Caco-2 (cell line): ENCODE measurements at regions of chr16 and their contacts with region 1.

Region 1: DNA sequence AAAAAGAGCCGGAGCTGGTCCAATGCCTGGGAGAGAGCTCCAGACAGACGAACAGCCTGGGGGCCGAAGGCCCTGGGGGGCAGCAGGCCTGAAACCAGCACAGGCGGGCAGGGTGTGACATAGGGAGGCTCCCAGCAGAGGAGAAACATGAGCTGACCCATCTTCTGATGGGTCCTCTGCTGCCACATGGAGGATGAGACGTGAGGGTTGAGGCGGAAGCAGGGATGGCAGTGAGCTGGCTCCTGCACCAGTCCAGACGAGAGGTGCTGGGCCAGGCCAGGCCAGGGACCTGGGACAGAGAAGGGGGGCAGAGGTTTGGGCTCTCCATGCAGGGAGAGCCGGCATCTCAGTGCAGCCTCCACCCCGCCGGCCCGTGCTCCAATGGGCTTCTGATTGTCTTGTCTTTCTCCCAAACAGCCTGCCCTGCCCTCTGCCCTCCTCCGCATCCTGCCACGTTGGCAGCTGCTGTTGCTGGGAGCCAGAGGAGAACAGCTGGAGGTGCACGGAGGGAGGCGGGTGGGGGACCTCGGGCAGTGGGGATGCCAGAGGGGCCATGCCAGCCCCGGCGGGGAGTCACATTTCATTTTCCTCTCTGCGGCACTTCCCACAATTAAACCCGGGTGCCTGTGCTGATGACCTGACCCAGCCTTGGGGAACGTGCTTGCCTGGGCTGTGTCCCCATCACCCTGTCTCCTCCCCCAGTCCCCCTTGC is 139.1 kb upstream of the GSE1 start:
- DNase-seq: no peak
- H3K4me3 ChIP-seq: no peak overlapping the region
- H3K4me3 Mint-ChIP-seq: no peak overlapping the region
- H3K27ac Mint-ChIP-seq: no peak overlapping the region
- H3K4me1 ChIP-seq: peaks cover 19% of the 10 kb centered on the region
- H3K4me1 Mint-ChIP-seq: peaks cover 16% of the 10 kb centered on the region
- H3K27me3 ChIP-seq: no peaks in the 10 kb centered on the region
- H3K27me3 Mint-ChIP-seq: no peaks in the 10 kb centered on the region
- CTCF ChIP-seq: peak in 1 of 2 experiments; percentile 5

Region 2: GRCh38 chr16:85437166-85438055 is 36.7 kb before region 1 on chr16:
- CTCF ChIA-PET with region 1: interaction called, 8 read pairs
- POLR2A ChIA-PET with region 1: interaction called, 5 read pairs
- intact Hi-C with region 1: loop called (anchors 5 kb)
- DNase-seq: peak; percentile 89 to 93
- H3K4me3 ChIP-seq: peak overlapping the region; percentile 29
- H3K4me3 Mint-ChIP-seq: peak overlapping the region; percentile 76
- H3K27ac Mint-ChIP-seq: peak overlapping the region; percentile 92
- H3K4me1 ChIP-seq: peaks cover 43% of the 10 kb centered on the region
- H3K4me1 Mint-ChIP-seq: peaks cover 17% of the 10 kb centered on the region
- H3K27me3 ChIP-seq: no peaks in the 10 kb centered on the region
- H3K27me3 Mint-ChIP-seq: no peaks in the 10 kb centered on the region
- CTCF ChIP-seq: no peak

Region 3: DNA sequence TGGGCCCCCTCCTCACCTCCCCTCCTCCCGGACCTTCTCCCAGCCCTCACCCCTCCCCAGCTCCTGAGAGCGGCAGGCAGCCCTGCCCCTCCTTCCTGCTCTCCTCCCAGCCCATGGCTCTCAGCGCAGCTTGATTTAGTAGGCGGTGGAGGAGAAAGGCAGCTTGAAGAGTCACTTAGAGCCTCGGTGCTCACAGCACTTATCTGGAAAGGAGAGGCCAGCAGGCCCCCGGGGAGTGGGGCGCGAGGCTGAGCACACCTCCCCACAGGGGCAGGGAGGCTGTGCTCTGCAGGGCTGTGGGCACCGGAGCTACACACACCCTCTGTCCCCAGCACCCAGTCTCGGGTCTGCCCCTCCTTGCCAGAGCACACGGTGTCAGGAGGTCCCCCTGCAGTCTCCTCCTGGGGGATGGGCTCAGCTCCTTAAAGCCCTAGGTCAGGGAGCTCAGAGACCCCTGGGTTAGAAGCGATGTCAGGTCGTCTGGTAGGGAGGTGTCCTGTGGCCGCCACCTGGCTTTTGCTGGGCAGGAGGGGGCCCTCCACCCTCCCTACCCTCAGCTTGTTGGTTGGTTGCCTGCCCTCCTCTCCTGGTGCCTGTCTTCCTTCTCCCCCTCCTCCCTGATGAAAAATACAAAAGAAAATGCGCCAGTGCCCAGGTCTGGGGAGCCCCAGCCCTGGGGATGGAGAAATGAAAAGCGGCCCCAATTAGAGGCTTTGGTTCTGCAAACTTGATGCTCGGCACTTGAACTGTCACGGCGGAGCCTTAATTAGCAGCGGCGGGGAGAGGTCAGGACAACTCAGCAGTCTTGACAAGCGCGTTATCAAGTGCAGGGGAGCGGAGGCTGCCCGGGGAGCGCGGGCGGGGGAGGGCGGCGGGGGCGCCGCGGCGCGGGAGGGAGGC is 12.0 kb before region 1 on chr16:
- CTCF ChIA-PET with region 1: interaction called, 11 read pairs
- POLR2A ChIA-PET with region 1: no interaction called
- intact Hi-C with region 1: no loop called
- DNase-seq: peak; percentile 47 to 52
- H3K4me3 ChIP-seq: peak overlapping the region; percentile 40
- H3K4me3 Mint-ChIP-seq: peak overlapping the region; percentile 69
- H3K27ac Mint-ChIP-seq: no peak overlapping the region
- H3K4me1 ChIP-seq: peaks cover 36% of the 10 kb centered on the region
- H3K4me1 Mint-ChIP-seq: peaks cover 23% of the 10 kb centered on the region
- H3K27me3 ChIP-seq: no peaks in the 10 kb centered on the region
- H3K27me3 Mint-ChIP-seq: no peaks in the 10 kb centered on the region
- CTCF ChIP-seq: no peak

Region 4: DNA sequence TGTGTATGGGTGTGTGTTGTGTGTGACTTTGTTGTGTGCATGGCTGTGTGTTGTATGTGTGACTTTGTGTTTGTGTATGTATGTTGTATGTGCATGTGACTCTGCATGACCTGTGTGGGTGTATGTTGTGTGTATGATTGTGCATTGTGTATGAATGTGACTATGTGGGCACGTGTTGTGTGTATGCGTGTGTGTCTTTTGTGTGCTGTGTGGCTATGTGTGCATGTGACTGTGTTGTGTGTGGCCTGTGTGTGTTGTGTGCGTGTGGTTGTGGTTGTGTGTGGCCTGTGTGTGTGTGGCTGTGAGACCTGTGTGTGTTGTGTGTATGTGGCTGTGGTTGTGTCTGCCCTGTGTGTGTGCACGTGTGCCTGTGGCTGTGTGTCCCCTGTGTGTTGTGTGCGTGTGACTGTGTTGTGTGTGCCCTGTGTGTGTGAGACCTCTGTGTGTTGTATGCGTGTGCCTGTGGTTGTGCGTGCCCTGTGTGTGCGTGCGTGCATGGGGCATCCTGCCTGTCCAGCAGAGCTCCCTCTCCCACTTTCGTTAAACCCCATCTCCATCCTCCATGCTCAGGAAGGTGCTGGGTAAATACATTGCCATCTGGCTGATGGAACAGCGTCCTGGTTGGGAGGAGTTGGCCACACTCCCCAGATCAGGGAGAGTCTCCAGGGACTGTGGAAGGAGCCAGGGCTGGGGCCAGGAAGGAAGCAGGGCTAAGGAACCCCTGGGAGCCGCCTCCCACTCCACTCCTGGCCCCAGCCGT is 49.0 kb after region 1 on chr16:
- CTCF ChIA-PET with region 1: interaction called, 5 read pairs
- POLR2A ChIA-PET with region 1: no interaction called
- intact Hi-C with region 1: loop called (anchors 1 kb)
- DNase-seq: no peak
- H3K4me3 ChIP-seq: no peak overlapping the region
- H3K4me3 Mint-ChIP-seq: peak overlapping the region; percentile 33
- H3K27ac Mint-ChIP-seq: peak overlapping the region; percentile 89
- H3K4me1 ChIP-seq: peaks cover 82% of the 10 kb centered on the region
- H3K4me1 Mint-ChIP-seq: peaks cover 53% of the 10 kb centered on the region
- H3K27me3 ChIP-seq: no peaks in the 10 kb centered on the region
- H3K27me3 Mint-ChIP-seq: no peaks in the 10 kb centered on the region
- CTCF ChIP-seq: no peak